Naive thymus-derived CD4-positive, alpha-beta T cell (primary cell): ENCODE measurements at regions of chr5 and their contacts with region 1.

Region 1: GRCh38 chr5:43040287-43041098 is at the start of gene ANXA2R:
- DNase-seq: peak; percentile 76 to 98 (median 96)
- ATAC-seq: peak; percentile 72
- H3K4me3 ChIP-seq: peak within 1 kb of the TSS; percentile 73
- H3K4me3 Mint-ChIP-seq: peak within 1 kb of the TSS; percentile 82 to 99 (median 98)
- H3K27ac ChIP-seq: peak within 1 kb of the TSS; percentile 96
- H3K27ac Mint-ChIP-seq: peak within 1 kb of the TSS; percentile 93 to 100 (median 99)
- H3K4me1 ChIP-seq: peaks cover 17 to 31% of the 10 kb centered on the region in 2 donors
- H3K4me1 Mint-ChIP-seq: peaks cover 14 to 75% (median 45%) of the 10 kb centered on the region in 7 donors
- H3K27me3 ChIP-seq: no peaks in the 10 kb centered on the region
- H3K27me3 Mint-ChIP-seq: no peaks in the 10 kb centered on the region
- total RNA-seq, gene ANXA2R: 13.2 to 61.4 (median 42.0) TPM

Region 2: DNA sequence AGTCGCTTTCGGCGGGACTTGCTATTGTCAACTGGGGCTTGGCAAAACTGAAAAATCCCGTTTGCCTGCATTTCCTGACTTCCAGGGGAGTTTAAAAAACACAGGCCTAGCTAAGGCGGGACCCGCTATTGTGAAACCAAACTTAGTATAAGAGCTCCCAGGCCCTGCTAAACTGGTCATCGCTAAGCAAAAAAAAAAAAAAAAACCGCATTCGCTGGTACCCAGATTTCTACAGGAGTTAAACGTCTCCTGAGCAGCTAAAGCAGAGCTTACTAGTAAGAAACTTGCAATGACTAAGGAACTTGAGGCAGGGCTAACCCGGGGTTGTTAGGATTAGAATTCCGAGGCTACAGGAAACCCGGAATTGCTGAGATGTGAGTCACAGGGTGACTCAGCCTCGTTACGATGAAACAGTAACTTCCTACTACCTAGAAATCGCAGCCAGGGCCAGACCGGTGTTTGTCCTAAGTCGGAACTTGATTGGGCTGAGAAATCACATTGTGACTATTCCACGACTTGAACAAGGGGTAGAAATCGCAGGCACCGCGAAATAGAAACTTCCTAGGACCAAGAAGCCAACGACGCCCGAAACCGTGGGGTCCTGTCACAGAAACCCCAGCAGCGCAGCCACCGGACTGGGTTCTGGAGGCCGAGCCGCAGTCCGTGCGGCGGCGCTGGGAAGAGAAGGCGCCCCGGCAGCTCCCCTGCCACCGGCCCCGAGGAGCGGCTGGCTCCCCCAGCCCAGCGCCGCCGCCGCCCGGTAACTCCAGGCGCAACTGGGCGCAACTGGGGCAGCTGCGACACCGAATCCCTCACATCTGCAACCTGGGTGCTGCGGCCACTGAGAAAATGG is 89.8 kb before region 1 on chr5:
- CTCF ChIA-PET with region 1: interaction called, 4 read pairs
- POLR2A ChIA-PET with region 1: interaction called, 188 read pairs
- intact Hi-C with region 1: loop called (anchors 1 kb)
- DNase-seq: peak in 8 of 9 donors; percentile 39 to 77 (median 51)
- ATAC-seq: peak; percentile 51
- H3K4me3 ChIP-seq: peak overlapping the region; percentile 80
- H3K4me3 Mint-ChIP-seq: peak overlapping the region; percentile 87 to 99 (median 97)
- H3K27ac ChIP-seq: peak overlapping the region; percentile 98
- H3K27ac Mint-ChIP-seq: peak overlapping the region; percentile 97 to 100 (median 99)
- H3K4me1 ChIP-seq: peaks cover 5 to 22% of the 10 kb centered on the region in 2 donors
- H3K4me1 Mint-ChIP-seq: peaks cover 13 to 51% (median 23%) of the 10 kb centered on the region in 7 donors
- H3K27me3 ChIP-seq: no peaks in the 10 kb centered on the region
- H3K27me3 Mint-ChIP-seq: peaks cover 0 to 9% (median 0%) of the 10 kb centered on the region in 5 donors

Region 3: GRCh38 chr5:43019614-43020293 is 20.7 kb before region 1 on chr5:
- CTCF ChIA-PET with region 1: interaction called, 154 read pairs
- POLR2A ChIA-PET with region 1: interaction called, 1,055 read pairs
- intact Hi-C with region 1: loop called (anchors 1 kb)
- DNase-seq: peak; percentile 63 to 94 (median 88)
- ATAC-seq: peak; percentile 77
- H3K4me3 ChIP-seq: peak overlapping the region; percentile 76
- H3K4me3 Mint-ChIP-seq: peak overlapping the region; percentile 92 to 99 (median 98)
- H3K27ac ChIP-seq: peak overlapping the region; percentile 96
- H3K27ac Mint-ChIP-seq: peak overlapping the region; percentile 96 to 100 (median 99)
- H3K4me1 ChIP-seq: peaks cover 34 to 35% of the 10 kb centered on the region in 2 donors
- H3K4me1 Mint-ChIP-seq: peaks cover 20 to 52% (median 46%) of the 10 kb centered on the region in 7 donors
- H3K27me3 ChIP-seq: no peaks in the 10 kb centered on the region
- H3K27me3 Mint-ChIP-seq: no peaks in the 10 kb centered on the region

Region 4: GRCh38 chr5:43066799-43067741 is 26.6 kb after region 1 on chr5:
- CTCF ChIA-PET with region 1: interaction called, 46 read pairs
- POLR2A ChIA-PET with region 1: interaction called, 595 read pairs
- intact Hi-C with region 1: loop called (anchors 1 kb)
- DNase-seq: peak; percentile 80 to 96 (median 89)
- ATAC-seq: peak; percentile 69
- H3K4me3 ChIP-seq: peak overlapping the region; percentile 82
- H3K4me3 Mint-ChIP-seq: peak overlapping the region; percentile 93 to 100 (median 98)
- H3K27ac ChIP-seq: peak overlapping the region; percentile 90
- H3K27ac Mint-ChIP-seq: peak overlapping the region; percentile 99 to 100 (median 99)
- H3K4me1 ChIP-seq: peaks cover 25 to 33% of the 10 kb centered on the region in 2 donors
- H3K4me1 Mint-ChIP-seq: peaks cover 26 to 67% (median 44%) of the 10 kb centered on the region in 7 donors
- H3K27me3 ChIP-seq: no peaks in the 10 kb centered on the region
- H3K27me3 Mint-ChIP-seq: no peaks in the 10 kb centered on the region

Region 5: GRCh38 chr5:43191740-43192557 is 151.5 kb after region 1 on chr5 and contains the start of gene NIM1K:
- CTCF ChIA-PET with region 1: no interaction called
- POLR2A ChIA-PET with region 1: interaction called, 4 read pairs
- intact Hi-C with region 1: loop called in 1 of 2 experiments (anchors 1 kb)
- DNase-seq: peak in 8 of 9 donors; percentile 7 to 55 (median 16)
- ATAC-seq: peak; percentile 51
- H3K4me3 ChIP-seq: peak within 1 kb of the TSS; percentile 63
- H3K4me3 Mint-ChIP-seq: peak within 1 kb of the TSS; percentile 81 to 94 (median 88)
- H3K27ac ChIP-seq: no peak within 1 kb of the TSS
- H3K27ac Mint-ChIP-seq: peak within 1 kb of the TSS in 6 of 9 donors; percentile 21 to 86 (median 71)
- H3K4me1 ChIP-seq: peaks cover 4 to 18% of the 10 kb centered on the region in 2 donors
- H3K4me1 Mint-ChIP-seq: peaks cover 11 to 33% (median 23%) of the 10 kb centered on the region in 7 donors
- H3K27me3 ChIP-seq: peaks cover 0 to 5% of the 10 kb centered on the region in 2 donors
- H3K27me3 Mint-ChIP-seq: peaks cover 15 to 22% (median 19%) of the 10 kb centered on the region in 5 donors
- total RNA-seq, gene NIM1K: 0.40 to 0.97 (median 0.61) TPM

Region 6: GRCh38 chr5:43602461-43603343 is 562.2 kb after region 1 on chr5 and contains the start of gene NNT:
- CTCF ChIA-PET with region 1: no interaction called
- POLR2A ChIA-PET with region 1: interaction called, 3 read pairs
- intact Hi-C with region 1: loop called in 1 of 2 experiments (anchors 1 kb)
- DNase-seq: peak; percentile 71 to 85 (median 78)
- ATAC-seq: peak; percentile 85
- H3K4me3 ChIP-seq: peak within 1 kb of the TSS; percentile 78
- H3K4me3 Mint-ChIP-seq: peak within 1 kb of the TSS; percentile 90 to 99 (median 94)
- H3K27ac ChIP-seq: peak within 1 kb of the TSS; percentile 87
- H3K27ac Mint-ChIP-seq: peak within 1 kb of the TSS; percentile 86 to 98 (median 93)
- H3K4me1 ChIP-seq: peaks cover 6 to 14% of the 10 kb centered on the region in 2 donors
- H3K4me1 Mint-ChIP-seq: peaks cover 26 to 72% (median 60%) of the 10 kb centered on the region in 7 donors
- H3K27me3 ChIP-seq: no peaks in the 10 kb centered on the region
- H3K27me3 Mint-ChIP-seq: no peaks in the 10 kb centered on the region
- total RNA-seq, gene NNT: 42.5 to 73.5 (median 60.7) TPM